ENCODE measurements at regions of chr2 and their contacts with region 1.

Region 1: GRCh38 chr2:113273027-113273551 is 5.6 kb downstream of the PAX8 start:
- DNase-seq: peak in 1 of 2 experiments; percentile 59
- H3K4me3 ChIP-seq: peak overlapping the region in 1 of 4 experiments; percentile 47; a peak in 2 of 8 replicates
- H3K27ac ChIP-seq: no peak overlapping the region
- H3K4me1 ChIP-seq: peaks cover 4 to 8% (median 7%) of the 10 kb centered on the region in 4 experiments
- H3K27me3 ChIP-seq: peaks cover 55 to 83% (median 74%) of the 10 kb centered on the region in 4 experiments
- CTCF ChIP-seq: peak; percentile 45 to 53 (median 45)
- EP300 ChIP-seq: no peak
- POLR2A ChIP-seq: no peak
- RAD21 ChIP-seq: peak; percentile 25 to 41; a peak in 3 of 4 replicates

Region 2: GRCh38 chr2:113089916-113090315 is 183.2 kb before region 1 on chr2:
- CTCF ChIA-PET with region 1: no interaction called
- POLR2A ChIA-PET with region 1: no interaction called
- DNase-seq: no peak
- H3K4me3 ChIP-seq: no peak overlapping the region
- H3K27ac ChIP-seq: no peak overlapping the region
- H3K4me1 ChIP-seq: no peaks in the 10 kb centered on the region
- H3K27me3 ChIP-seq: no peaks in the 10 kb centered on the region; a peak in 1 of 7 replicates
- CTCF ChIP-seq: no peak
- EP300 ChIP-seq: no peak
- POLR2A ChIP-seq: no peak
- RAD21 ChIP-seq: no peak

Region 3: DNA sequence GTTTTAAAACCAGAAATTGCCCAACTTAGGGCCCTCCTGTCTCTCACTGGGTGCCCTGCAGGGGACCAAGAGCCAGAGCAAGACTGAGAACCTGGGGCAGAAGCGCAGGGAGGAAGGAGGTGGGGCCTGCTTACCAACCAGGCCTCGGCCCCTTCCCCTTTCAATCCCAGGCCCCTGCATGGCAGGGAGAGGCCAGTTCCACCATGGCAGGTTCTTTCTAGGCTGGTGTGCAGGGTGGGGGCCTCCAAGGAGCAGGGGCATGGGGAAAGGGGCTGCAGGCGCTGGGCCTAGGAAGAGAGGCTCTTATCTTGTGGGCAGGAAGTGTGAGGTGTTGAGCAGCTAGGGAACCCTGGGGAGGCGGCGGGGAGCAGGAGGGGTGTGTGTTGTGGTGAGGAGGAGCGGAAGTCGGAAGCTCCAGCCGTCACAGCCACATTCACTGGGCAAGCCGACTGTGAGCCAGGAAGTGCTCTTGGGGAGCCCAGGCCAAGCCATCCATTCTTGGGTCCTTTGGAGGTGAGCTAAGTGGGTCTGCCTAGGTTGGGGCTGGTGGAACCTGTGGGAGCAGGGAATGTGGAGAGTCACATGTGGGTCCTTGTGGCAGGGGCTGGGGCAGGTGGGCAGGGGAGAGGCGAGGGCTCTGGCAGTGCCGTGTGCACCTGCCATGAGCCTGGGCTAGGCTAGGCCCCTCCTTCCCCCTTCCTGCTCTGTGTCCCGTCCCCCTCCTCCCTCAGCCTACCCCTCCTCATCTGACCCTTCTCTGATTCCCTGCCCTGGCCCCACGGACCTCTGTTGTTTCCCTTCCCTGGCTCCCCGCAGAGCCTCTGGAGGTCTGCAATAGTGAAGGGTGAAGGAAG is 99.3 kb before region 1 on chr2 and contains the start of gene PSD4:
- CTCF ChIA-PET with region 1: no interaction called
- POLR2A ChIA-PET with region 1: no interaction called
- DNase-seq: no peak
- H3K4me3 ChIP-seq: no peak within 1 kb of the TSS
- H3K27ac ChIP-seq: no peak within 1 kb of the TSS
- H3K4me1 ChIP-seq: peaks cover 0 to 3% (median 0%) of the 10 kb centered on the region in 4 experiments; a peak in 3 of 7 replicates
- H3K27me3 ChIP-seq: no peaks in the 10 kb centered on the region
- CTCF ChIP-seq: no peak
- EP300 ChIP-seq: no peak
- POLR2A ChIP-seq: no peak
- RAD21 ChIP-seq: no peak
- total RNA-seq, gene PSD4: 1.2 and 1.3 TPM in 2 replicates

Region 4: DNA sequence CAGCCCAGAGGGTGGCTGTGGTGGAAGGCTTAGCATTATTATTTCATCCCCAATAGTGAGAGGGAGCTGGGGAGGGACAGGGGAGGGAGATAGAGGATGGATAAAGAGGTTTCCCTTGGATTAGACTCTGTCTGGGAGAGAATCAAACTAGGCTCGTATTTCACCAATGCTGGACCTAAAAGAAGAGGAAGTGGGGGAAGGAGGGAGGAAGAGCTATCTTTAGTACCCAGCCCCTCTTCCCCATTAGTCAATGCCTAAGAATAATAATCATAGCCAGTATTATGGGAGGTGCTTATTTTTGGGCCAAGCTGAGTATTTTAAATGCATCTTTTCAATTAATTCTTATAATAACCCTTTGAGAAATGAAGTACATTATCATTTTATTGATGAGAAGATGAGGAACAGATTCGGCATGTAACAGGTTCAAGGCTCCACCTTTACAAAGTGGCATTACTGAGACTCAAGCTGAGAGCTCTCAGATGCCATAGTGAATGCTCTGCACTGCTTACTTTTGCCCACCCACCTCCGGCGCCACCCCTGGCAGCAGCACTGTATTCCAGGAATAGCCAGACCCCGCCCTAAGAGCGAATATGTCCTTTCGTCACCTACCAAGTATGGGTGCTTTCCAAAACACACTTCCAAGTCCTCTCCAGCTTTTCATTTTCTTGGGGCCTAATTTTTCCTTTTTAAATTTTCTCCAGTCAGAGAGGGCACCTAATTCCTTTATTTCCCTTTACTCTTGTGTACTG is 15.4 kb before region 1 on chr2:
- CTCF ChIA-PET with region 1: interaction called, 45 read pairs
- POLR2A ChIA-PET with region 1: interaction called, 5 read pairs
- DNase-seq: no peak
- H3K4me3 ChIP-seq: no peak overlapping the region
- H3K27ac ChIP-seq: no peak overlapping the region
- H3K4me1 ChIP-seq: no peaks in the 10 kb centered on the region; a peak in 1 of 7 replicates
- H3K27me3 ChIP-seq: peaks cover 0 to 2% (median 0%) of the 10 kb centered on the region in 4 experiments; a peak in 3 of 7 replicates
- CTCF ChIP-seq: no peak
- EP300 ChIP-seq: no peak
- POLR2A ChIP-seq: no peak
- RAD21 ChIP-seq: no peak

Region 5: DNA sequence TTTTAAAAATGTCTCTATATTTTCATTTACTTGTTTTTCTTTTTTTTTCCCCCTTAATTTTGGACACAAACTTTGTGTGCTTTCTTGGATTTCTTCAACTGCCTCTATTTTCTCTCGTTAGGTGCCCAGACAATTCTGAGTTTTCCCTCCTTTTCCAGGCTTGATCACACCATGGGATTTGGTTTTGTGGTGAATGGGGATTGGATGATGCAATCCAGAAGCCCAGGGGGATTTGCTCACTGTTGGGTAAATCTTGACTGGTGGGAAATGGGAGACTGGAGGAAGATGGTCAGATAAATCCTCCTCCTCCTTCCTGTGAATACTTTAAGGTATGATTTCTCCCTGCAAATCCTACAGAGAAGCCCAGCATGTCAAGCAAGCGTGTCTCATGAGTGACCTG is 25.1 kb after region 1 on chr2:
- CTCF ChIA-PET with region 1: interaction called, 11 read pairs
- POLR2A ChIA-PET with region 1: interaction called, 3 read pairs
- DNase-seq: no peak
- H3K4me3 ChIP-seq: no peak overlapping the region
- H3K27ac ChIP-seq: no peak overlapping the region
- H3K4me1 ChIP-seq: no peaks in the 10 kb centered on the region
- H3K27me3 ChIP-seq: peaks cover 0 to 7% (median 2%) of the 10 kb centered on the region in 4 experiments; a peak in 4 of 7 replicates
- CTCF ChIP-seq: no peak
- EP300 ChIP-seq: no peak
- POLR2A ChIP-seq: no peak
- RAD21 ChIP-seq: no peak

Measured in H1 (cell line).